Stomach (tissue), 19 donors: ENCODE measurements at regions of chr9 and their contacts with region 1.

Region 1: GRCh38 chr9:137188490-137189296 is at the starts of genes ANAPC2 and SSNA1:
- DNase-seq: peak; percentile 95 to 98
- H3K4me3 ChIP-seq: peak within 1 kb of the TSS; percentile 95 to 99 (median 97)
- H3K27ac ChIP-seq: peak within 1 kb of the TSS; percentile 96 to 97 (median 96)
- H3K4me1 ChIP-seq: peaks cover 35 to 83% (median 77%) of the 10 kb centered on the region in 4 donors
- H3K27me3 ChIP-seq: no peaks in the 10 kb centered on the region
- CTCF ChIP-seq: peak in 3 of 7 experiments; percentile 6 to 48 (median 31)
- EP300 ChIP-seq: no peak
- POLR2A ChIP-seq: peak in 2 of 4 donors; percentile 56
- total RNA-seq, gene ANAPC2: 35.8 to 147 (median 42.9) TPM
- total RNA-seq, gene SSNA1: 28.1 to 154 (median 81.4) TPM

Region 2: GRCh38 chr9:137150617-137151457 is 37.9 kb before region 1 on chr9:
- intact Hi-C with region 1: no loop called
- DNase-seq: peak; percentile 49 to 67
- H3K4me3 ChIP-seq: no peak overlapping the region
- H3K27ac ChIP-seq: no peak overlapping the region
- H3K4me1 ChIP-seq: no peaks in the 10 kb centered on the region
- H3K27me3 ChIP-seq: peaks cover 3 to 66% (median 32%) of the 10 kb centered on the region in 3 donors
- CTCF ChIP-seq: no peak
- EP300 ChIP-seq: no peak
- POLR2A ChIP-seq: no peak

Region 3: GRCh38 chr9:137236238-137236935 is 47.7 kb after region 1 on chr9:
- intact Hi-C with region 1: loop called (anchors 10 kb)
- DNase-seq: peak; percentile 93 to 96
- H3K4me3 ChIP-seq: peak overlapping the region in 3 of 4 donors; percentile 14 to 38 (median 34)
- H3K27ac ChIP-seq: peak overlapping the region in 2 of 5 donors; percentile 24 to 37
- H3K4me1 ChIP-seq: peaks cover 27 to 60% (median 57%) of the 10 kb centered on the region in 4 donors
- H3K27me3 ChIP-seq: peaks cover 15 to 49% (median 42%) of the 10 kb centered on the region in 3 donors
- CTCF ChIP-seq: peak in 5 of 7 experiments; percentile 98 to 100 (median 99)
- EP300 ChIP-seq: no peak
- POLR2A ChIP-seq: no peak

Region 4: GRCh38 chr9:137326445-137327065 is 137.9 kb after region 1 on chr9:
- intact Hi-C with region 1: no loop called
- DNase-seq: no peak
- H3K4me3 ChIP-seq: no peak overlapping the region
- H3K27ac ChIP-seq: no peak overlapping the region
- H3K4me1 ChIP-seq: no peaks in the 10 kb centered on the region
- H3K27me3 ChIP-seq: no peaks in the 10 kb centered on the region
- CTCF ChIP-seq: no peak
- EP300 ChIP-seq: no peak
- POLR2A ChIP-seq: no peak